ENCODE measurements at regions of chr21 and their contacts with region 1.

Region 1: GRCh38 chr21:32257962-32258785 is 20.7 kb downstream of the MIS18A start:
- H3K4me3 Mint-ChIP-seq: no peak overlapping the region
- H3K27ac Mint-ChIP-seq: no peak overlapping the region
- H3K4me1 Mint-ChIP-seq: no peaks in the 10 kb centered on the region
- H3K27me3 Mint-ChIP-seq: no peaks in the 10 kb centered on the region

Region 2: DNA sequence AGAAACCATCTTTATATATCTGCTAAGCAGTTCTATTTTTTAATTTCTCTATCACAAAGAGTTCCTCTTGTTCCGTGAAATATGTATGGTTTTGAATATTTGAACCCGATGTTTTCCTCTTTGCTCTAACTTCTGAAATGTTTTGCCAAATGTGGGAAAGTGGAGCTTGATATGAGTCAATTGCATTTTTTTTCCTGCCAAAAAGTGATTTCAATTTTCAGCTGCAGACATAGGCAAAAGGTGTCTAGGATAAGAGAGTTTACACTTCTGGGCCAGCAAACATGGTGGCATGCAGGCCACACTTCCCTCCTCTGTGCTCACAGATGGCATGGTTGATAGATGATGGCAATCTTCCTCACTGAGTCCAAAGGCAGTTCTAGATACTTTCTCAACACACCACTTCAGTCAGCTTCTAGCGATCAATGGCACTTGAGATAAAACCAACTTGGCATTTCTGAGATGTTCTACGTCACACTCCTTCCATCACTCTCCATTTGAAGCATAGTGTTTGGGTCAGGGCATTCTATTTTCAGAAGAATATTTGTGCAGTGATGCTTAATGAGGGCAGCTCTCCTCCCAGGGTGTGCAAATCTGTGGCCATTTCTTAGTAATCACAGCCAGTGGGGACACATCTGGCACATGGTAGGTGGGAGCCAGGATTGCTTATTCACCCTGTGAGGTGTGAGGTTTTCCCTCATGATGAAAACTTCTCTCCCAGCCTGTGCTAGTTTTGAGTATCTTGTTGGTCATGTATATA is 471.8 kb before region 1 on chr21:
- intact Hi-C with region 1: loop called (anchors 5 kb)
- H3K4me3 Mint-ChIP-seq: no peak overlapping the region
- H3K27ac Mint-ChIP-seq: no peak overlapping the region
- H3K4me1 Mint-ChIP-seq: peaks cover 22% of the 10 kb centered on the region
- H3K27me3 Mint-ChIP-seq: peaks cover 7% of the 10 kb centered on the region

Region 3: GRCh38 chr21:31866077-31866511 is 392.1 kb before region 1 on chr21:
- intact Hi-C with region 1: loop called (anchors 2 kb)
- H3K4me3 Mint-ChIP-seq: no peak overlapping the region
- H3K27ac Mint-ChIP-seq: no peak overlapping the region
- H3K4me1 Mint-ChIP-seq: no peaks in the 10 kb centered on the region
- H3K27me3 Mint-ChIP-seq: peaks cover 27% of the 10 kb centered on the region